Activated CD8-positive, alpha-beta T cell treated with anti-CD3 and anti-CD28 coated beads, Interleukin-2, amount 10 ng/mL, durations not matched to agents 7 days and 5 days (primary cell): ENCODE measurements at regions of chr4 and their contacts with region 1.

Region 1: DNA sequence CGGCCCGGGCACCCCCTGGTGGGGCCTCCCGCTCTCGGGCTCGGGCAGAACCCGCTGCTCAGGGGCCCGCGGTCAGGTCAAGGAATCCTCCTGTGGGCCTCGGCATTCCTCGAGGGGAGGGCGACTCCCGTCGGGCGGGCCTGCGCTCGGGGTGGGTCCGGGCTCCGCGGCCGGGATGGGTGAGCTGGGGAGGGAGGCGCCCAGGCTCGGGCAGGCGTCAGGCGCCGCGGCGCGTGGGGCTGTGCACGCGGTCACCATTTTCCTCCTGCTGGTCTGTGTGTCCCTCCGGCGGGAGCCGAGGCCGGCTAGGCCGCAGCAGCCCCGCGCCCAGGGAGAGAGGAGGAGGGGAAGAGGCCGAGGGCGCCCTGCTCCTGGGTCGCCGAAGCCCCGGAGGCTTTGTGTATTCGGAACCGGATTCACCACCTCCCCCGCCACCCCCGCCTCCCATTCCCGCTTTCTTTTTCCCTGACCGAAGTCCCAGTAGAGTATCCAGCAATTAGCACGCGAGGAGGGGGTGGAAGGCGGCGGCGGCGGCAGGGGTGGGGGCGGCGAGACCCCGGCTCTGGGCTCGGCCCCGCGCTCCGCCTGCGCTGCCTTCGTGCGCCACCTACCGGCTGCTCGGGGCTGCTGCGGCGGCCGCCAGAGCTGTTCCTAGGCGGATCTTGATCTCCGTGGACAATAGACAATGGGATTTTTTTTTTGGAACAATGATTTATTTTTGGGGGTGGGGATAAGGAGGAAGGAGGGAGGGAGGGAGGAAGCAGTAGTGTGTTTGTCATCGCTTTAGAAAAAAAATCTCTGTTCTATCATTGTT is 99.0 kb upstream of the MAML3 start:
- DNase-seq: peak; percentile 62
- ATAC-seq: peak; percentile 86
- H3K4me3 Mint-ChIP-seq: peak overlapping the region; percentile 59
- H3K27ac Mint-ChIP-seq: peak overlapping the region; percentile 12
- H3K4me1 Mint-ChIP-seq: peaks cover 28% of the 10 kb centered on the region
- H3K27me3 Mint-ChIP-seq: peaks cover 13% of the 10 kb centered on the region

Region 2: GRCh38 chr4:140012688-140013486 is 240.1 kb before region 1 on chr4:
- CTCF ChIA-PET with region 1: interaction called, 52 read pairs
- POLR2A ChIA-PET with region 1: no interaction called
- DNase-seq: peak; percentile 71
- ATAC-seq: peak; percentile 97
- H3K4me3 Mint-ChIP-seq: no peak overlapping the region
- H3K27ac Mint-ChIP-seq: no peak overlapping the region
- H3K4me1 Mint-ChIP-seq: peaks cover 8% of the 10 kb centered on the region
- H3K27me3 Mint-ChIP-seq: peaks cover 7% of the 10 kb centered on the region

Region 3: DNA sequence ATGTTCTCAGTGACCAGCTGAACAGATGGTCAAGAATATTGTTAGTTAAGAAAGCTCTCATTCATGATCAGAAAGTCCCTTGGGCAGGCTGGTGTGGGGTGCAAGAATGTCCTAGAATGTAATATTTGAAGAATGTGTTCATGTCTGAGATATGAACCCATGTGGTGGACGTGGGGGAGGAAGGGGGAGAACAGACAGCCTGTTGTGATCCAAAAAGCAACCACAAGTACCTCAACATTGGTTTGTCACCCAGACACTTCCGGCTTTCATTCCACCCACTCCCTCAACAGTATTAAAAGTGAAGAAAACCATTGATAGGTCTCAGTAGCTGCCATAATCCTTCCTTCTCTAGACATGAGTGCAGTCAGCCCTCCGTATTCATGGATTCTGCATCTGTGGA is 181.1 kb before region 1 on chr4:
- CTCF ChIA-PET with region 1: interaction called, 13 read pairs
- POLR2A ChIA-PET with region 1: no interaction called
- DNase-seq: peak; percentile 88
- ATAC-seq: peak; percentile 85
- H3K4me3 Mint-ChIP-seq: peak overlapping the region; percentile 55
- H3K27ac Mint-ChIP-seq: peak overlapping the region; percentile 85
- H3K4me1 Mint-ChIP-seq: peaks cover 58% of the 10 kb centered on the region
- H3K27me3 Mint-ChIP-seq: peaks cover 14% of the 10 kb centered on the region

Region 4: GRCh38 chr4:140153718-140154571 is 99.0 kb before region 1 on chr4 and contains the start of gene MAML3:
- CTCF ChIA-PET with region 1: interaction called, 14 read pairs
- POLR2A ChIA-PET with region 1: interaction called, 3 read pairs
- DNase-seq: peak; percentile 89
- ATAC-seq: peak; percentile 41
- H3K4me3 Mint-ChIP-seq: peak within 1 kb of the TSS; percentile 90
- H3K27ac Mint-ChIP-seq: peak within 1 kb of the TSS; percentile 79
- H3K4me1 Mint-ChIP-seq: peaks cover 39% of the 10 kb centered on the region
- H3K27me3 Mint-ChIP-seq: peaks cover 14% of the 10 kb centered on the region
- total RNA-seq, gene MAML3: 4.0 to 4.1 TPM

Region 5: GRCh38 chr4:140233791-140234696 is 18.9 kb before region 1 on chr4:
- CTCF ChIA-PET with region 1: interaction called, 34 read pairs
- POLR2A ChIA-PET with region 1: no interaction called
- DNase-seq: no peak
- ATAC-seq: peak; percentile 47
- H3K4me3 Mint-ChIP-seq: peak overlapping the region; percentile 46
- H3K27ac Mint-ChIP-seq: peak overlapping the region; percentile 90
- H3K4me1 Mint-ChIP-seq: peaks cover 38% of the 10 kb centered on the region
- H3K27me3 Mint-ChIP-seq: peaks cover 3% of the 10 kb centered on the region

Region 6: GRCh38 chr4:140497747-140498636 is 245.0 kb after region 1 on chr4 and contains the start of gene MGAT4D:
- CTCF ChIA-PET with region 1: no interaction called
- POLR2A ChIA-PET with region 1: no interaction called
- DNase-seq: no peak
- ATAC-seq: peak; percentile 44
- H3K4me3 Mint-ChIP-seq: peak within 1 kb of the TSS; percentile 5
- H3K27ac Mint-ChIP-seq: no peak within 1 kb of the TSS
- H3K4me1 Mint-ChIP-seq: peaks cover 4% of the 10 kb centered on the region
- H3K27me3 Mint-ChIP-seq: peaks cover 57% of the 10 kb centered on the region
- total RNA-seq, gene MGAT4D: not detected

Region 7: GRCh38 chr4:140533951-140534480 is 281.1 kb after region 1 on chr4:
- CTCF ChIA-PET with region 1: no interaction called
- POLR2A ChIA-PET with region 1: no interaction called
- DNase-seq: no peak
- ATAC-seq: no peak
- H3K4me3 Mint-ChIP-seq: no peak overlapping the region
- H3K27ac Mint-ChIP-seq: no peak overlapping the region
- H3K4me1 Mint-ChIP-seq: peaks cover 4% of the 10 kb centered on the region
- H3K27me3 Mint-ChIP-seq: no peaks in the 10 kb centered on the region